H1 (cell line): ENCODE measurements at regions of chr1 and their contacts with region 1.

Region 1: DNA sequence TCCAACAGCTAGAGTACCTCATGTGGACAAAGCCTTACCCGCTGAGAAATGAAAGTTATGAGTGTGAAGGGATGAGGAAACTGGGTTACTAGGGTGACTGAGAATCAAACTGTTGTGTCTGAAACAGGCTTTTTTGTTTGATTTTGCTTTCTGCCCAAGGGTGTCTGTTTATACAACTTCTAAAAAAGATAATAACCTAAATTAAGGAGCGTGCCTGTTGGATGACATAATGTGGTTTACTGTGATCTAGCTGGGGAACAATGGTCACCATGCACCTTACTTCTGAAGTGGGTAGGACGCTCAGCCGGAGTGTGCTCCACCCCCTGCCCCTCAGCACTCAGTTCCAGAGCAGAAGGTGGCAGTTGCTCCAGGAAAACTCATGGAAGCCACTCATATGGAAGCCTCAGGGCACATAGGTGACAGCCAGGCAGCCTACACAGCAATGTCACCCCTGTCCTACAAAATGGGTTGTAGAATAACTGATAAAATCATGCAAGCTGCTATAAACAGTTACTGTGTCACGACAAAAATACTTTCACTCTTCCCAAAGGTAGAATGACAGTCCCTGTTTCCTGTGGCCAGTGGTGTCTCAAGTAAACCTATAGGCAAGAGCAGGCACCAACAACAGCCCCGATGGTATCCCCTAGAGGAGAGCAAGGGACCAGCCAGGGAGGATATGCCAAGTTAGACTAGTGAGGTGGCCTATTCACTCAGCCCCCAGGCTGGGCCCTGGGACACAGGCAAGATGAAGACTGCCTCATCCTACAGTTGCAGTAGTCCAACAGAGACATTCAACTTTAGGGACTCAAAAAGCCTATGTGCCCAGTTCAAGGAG is 29.3 kb downstream of the SIPA1L2 start:
- DNase-seq: no peak
- H3K4me3 ChIP-seq: no peak overlapping the region
- H3K27ac ChIP-seq: no peak overlapping the region
- H3K4me1 ChIP-seq: peaks cover 0 to 2% (median 1%) of the 10 kb centered on the region in 4 experiments; a peak in 2 of 7 replicates
- H3K27me3 ChIP-seq: no peaks in the 10 kb centered on the region
- CTCF ChIP-seq: peak in 2 of 3 experiments; percentile 9 to 10; a peak in 1 of 4 replicates
- EP300 ChIP-seq: no peak
- POLR2A ChIP-seq: no peak
- RAD21 ChIP-seq: no peak; a peak in 1 of 4 replicates

Region 2: GRCh38 chr1:232571523-232571922 is 29.1 kb before region 1 on chr1:
- CTCF ChIA-PET with region 1: interaction called, 10 read pairs
- POLR2A ChIA-PET with region 1: no interaction called
- DNase-seq: no peak
- H3K4me3 ChIP-seq: no peak overlapping the region
- H3K27ac ChIP-seq: no peak overlapping the region
- H3K4me1 ChIP-seq: peaks cover 0 to 3% (median 0%) of the 10 kb centered on the region in 4 experiments; a peak in 2 of 7 replicates
- H3K27me3 ChIP-seq: no peaks in the 10 kb centered on the region
- CTCF ChIP-seq: no peak
- EP300 ChIP-seq: no peak
- POLR2A ChIP-seq: no peak
- RAD21 ChIP-seq: no peak

Region 3: GRCh38 chr1:232586679-232587078 is 14.0 kb before region 1 on chr1:
- CTCF ChIA-PET with region 1: interaction called, 22 read pairs
- POLR2A ChIA-PET with region 1: no interaction called
- DNase-seq: no peak
- H3K4me3 ChIP-seq: no peak overlapping the region
- H3K27ac ChIP-seq: no peak overlapping the region
- H3K4me1 ChIP-seq: no peaks in the 10 kb centered on the region; a peak in 1 of 7 replicates
- H3K27me3 ChIP-seq: no peaks in the 10 kb centered on the region
- CTCF ChIP-seq: no peak
- EP300 ChIP-seq: no peak
- POLR2A ChIP-seq: no peak
- RAD21 ChIP-seq: no peak

Region 4: GRCh38 chr1:232613752-232614381 is 13.2 kb after region 1 on chr1:
- CTCF ChIA-PET with region 1: interaction called, 12 read pairs
- POLR2A ChIA-PET with region 1: interaction called, 3 read pairs
- DNase-seq: no peak
- H3K4me3 ChIP-seq: no peak overlapping the region
- H3K27ac ChIP-seq: no peak overlapping the region
- H3K4me1 ChIP-seq: peaks cover 0 to 5% (median under 1%) of the 10 kb centered on the region in 4 experiments; a peak in 4 of 7 replicates
- H3K27me3 ChIP-seq: no peaks in the 10 kb centered on the region
- CTCF ChIP-seq: no peak
- EP300 ChIP-seq: no peak
- POLR2A ChIP-seq: no peak
- RAD21 ChIP-seq: no peak

Region 5: GRCh38 chr1:232620356-232620969 is 19.8 kb after region 1 on chr1:
- CTCF ChIA-PET with region 1: interaction called, 20 read pairs
- POLR2A ChIA-PET with region 1: no interaction called
- DNase-seq: no peak
- H3K4me3 ChIP-seq: no peak overlapping the region; a peak in 1 of 8 replicates
- H3K27ac ChIP-seq: no peak overlapping the region
- H3K4me1 ChIP-seq: peaks cover 2 to 17% (median 14%) of the 10 kb centered on the region in 4 experiments
- H3K27me3 ChIP-seq: no peaks in the 10 kb centered on the region
- CTCF ChIP-seq: no peak
- EP300 ChIP-seq: no peak
- POLR2A ChIP-seq: no peak
- RAD21 ChIP-seq: no peak

Region 6: DNA sequence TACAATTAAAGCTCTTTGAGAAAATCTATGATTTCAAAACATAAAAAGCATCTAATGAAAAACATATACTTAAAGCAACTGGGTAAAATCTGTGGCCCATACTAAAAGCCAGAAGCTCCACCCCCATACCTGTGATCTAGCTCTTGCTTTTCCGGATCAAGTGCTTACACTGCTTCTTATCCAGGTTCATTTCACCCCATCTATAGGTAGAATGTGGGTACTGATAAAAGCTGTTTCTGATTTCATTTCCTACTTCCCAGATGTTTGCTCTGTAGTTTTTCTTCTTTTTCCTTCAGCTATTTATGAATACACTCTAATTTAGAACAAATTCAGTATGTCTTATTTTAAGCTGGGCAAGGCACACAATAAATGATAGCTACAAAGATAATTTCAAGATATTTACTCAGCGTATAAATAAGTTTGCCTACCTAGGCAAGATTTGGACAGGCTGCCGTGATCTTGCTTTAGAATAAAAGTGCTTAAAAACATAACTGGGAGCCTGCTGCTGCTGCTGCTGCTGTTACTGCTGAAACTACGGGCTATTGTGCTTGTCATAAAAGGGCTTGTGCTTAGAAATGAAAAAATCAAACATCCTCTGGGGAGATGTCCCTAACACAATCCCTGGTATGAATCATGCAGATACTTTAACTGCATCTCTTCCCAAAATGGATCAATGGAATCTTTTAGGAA is 27.1 kb after region 1 on chr1:
- CTCF ChIA-PET with region 1: interaction called, 14 read pairs
- POLR2A ChIA-PET with region 1: no interaction called
- DNase-seq: no peak
- H3K4me3 ChIP-seq: no peak overlapping the region
- H3K27ac ChIP-seq: no peak overlapping the region
- H3K4me1 ChIP-seq: peaks cover 0 to 7% (median 5%) of the 10 kb centered on the region in 4 experiments
- H3K27me3 ChIP-seq: peaks cover 5 to 29% (median 14%) of the 10 kb centered on the region in 4 experiments; a peak in 6 of 7 replicates
- CTCF ChIP-seq: peak in 2 of 3 experiments; percentile 37 to 62; a peak in 2 of 4 replicates
- EP300 ChIP-seq: no peak
- POLR2A ChIP-seq: no peak
- RAD21 ChIP-seq: peak; percentile 75 to 82